ENCODE measurements at regions of chr1 and their contacts with region 1.

Region 1: GRCh38 chr1:117664314-117664713 is 58.5 kb downstream of the TENT5C start:
- DNase-seq: peak; percentile 76
- ATAC-seq: peak; percentile 85
- H3K4me3 Mint-ChIP-seq: no peak overlapping the region
- H3K27ac Mint-ChIP-seq: peak overlapping the region; percentile 84
- H3K4me1 Mint-ChIP-seq: peaks cover 66% of the 10 kb centered on the region
- H3K27me3 Mint-ChIP-seq: peaks cover 5% of the 10 kb centered on the region

Region 2: DNA sequence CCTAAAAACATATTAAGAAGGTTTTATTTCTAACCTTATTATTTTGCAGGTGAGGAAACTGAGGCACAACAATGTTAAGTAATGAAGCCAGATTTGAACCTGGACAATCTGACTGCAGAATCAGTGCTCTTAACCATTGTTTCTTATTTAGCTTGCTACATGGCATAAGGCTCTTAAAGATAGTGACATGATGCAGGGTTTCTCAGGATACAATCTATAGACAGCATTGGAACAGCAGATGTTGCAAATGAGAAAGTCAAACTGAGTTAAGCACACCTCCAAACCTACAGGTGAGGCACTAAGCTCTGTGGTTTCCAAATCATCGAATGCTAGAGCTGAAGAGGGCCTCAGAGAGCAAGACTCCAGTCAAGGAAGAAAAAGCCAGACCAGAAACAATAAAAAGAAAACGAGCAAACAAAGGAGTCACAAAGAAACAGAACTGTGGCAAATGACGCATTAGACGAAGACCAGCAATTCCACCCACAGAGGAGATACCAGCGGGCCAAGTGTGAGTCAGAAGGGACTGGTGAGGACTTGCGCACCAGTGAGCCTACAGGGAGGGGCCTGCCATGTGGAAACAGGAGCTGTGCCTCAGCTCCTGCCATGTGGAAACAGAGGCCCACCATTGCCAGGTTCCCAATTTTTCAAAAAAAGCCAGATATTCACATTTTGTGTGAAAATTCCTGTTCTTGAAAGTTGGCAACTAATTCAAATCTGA is 1107.9 kb before region 1 on chr1:
- CTCF ChIA-PET with region 1: no interaction called
- POLR2A ChIA-PET with region 1: no interaction called
- intact Hi-C with region 1: loop called in 1 of 2 experiments (anchors 5 kb)
- DNase-seq: peak; percentile 88
- ATAC-seq: peak; percentile 92
- H3K4me3 Mint-ChIP-seq: no peak overlapping the region
- H3K27ac Mint-ChIP-seq: peak overlapping the region; percentile 87
- H3K4me1 Mint-ChIP-seq: peaks cover 73% of the 10 kb centered on the region
- H3K27me3 Mint-ChIP-seq: no peaks in the 10 kb centered on the region

Region 3: DNA sequence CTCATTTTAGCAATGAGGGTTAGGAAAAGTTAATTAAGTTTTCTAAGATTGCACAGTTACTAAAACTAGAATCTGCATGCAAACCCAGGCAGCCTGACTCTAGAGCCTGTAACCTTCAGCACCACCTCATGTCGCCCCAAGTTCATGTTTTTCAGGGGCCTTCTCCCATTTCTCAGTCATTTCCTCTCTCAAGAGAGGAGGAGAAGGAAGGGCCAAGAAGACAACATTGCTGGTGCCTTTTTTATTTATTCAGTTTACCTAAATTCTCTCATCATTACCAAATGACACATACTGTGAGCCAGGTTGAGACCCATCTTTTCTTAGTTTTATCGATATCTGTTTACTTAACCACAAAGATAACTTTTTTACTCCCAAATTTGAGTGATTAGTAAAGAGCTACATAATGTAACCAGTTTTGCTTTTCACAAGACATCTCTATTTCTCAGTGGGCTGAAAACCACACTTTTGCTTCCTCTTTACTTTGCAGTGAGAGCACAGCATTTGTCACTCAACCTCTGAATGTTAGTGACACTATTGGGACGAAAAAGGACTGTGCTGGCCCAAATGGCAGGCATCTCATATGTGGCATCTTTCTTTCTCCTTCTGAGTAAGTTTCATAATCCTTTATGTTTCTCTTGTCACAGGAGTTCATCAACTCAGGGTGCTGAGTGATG is 662.9 kb before region 1 on chr1 and contains the start of gene CD101:
- CTCF ChIA-PET with region 1: no interaction called
- POLR2A ChIA-PET with region 1: interaction called, 3 read pairs
- intact Hi-C with region 1: loop called in 1 of 2 experiments (anchors 10 kb)
- DNase-seq: peak; percentile 70
- ATAC-seq: peak; percentile 95
- H3K4me3 Mint-ChIP-seq: peak within 1 kb of the TSS; percentile 3
- H3K27ac Mint-ChIP-seq: peak within 1 kb of the TSS; percentile 66
- H3K4me1 Mint-ChIP-seq: peaks cover 53% of the 10 kb centered on the region
- H3K27me3 Mint-ChIP-seq: peaks cover 3% of the 10 kb centered on the region
- total RNA-seq, gene CD101: 0.30 to 0.60 TPM

Region 4: GRCh38 chr1:117527566-117528102 is 136.7 kb before region 1 on chr1:
- CTCF ChIA-PET with region 1: interaction called, 3 read pairs
- POLR2A ChIA-PET with region 1: no interaction called
- intact Hi-C with region 1: loop called (anchors 1 kb)
- DNase-seq: no peak
- ATAC-seq: peak; percentile 37
- H3K4me3 Mint-ChIP-seq: no peak overlapping the region
- H3K27ac Mint-ChIP-seq: no peak overlapping the region
- H3K4me1 Mint-ChIP-seq: peaks cover 31% of the 10 kb centered on the region
- H3K27me3 Mint-ChIP-seq: no peaks in the 10 kb centered on the region

Region 5: DNA sequence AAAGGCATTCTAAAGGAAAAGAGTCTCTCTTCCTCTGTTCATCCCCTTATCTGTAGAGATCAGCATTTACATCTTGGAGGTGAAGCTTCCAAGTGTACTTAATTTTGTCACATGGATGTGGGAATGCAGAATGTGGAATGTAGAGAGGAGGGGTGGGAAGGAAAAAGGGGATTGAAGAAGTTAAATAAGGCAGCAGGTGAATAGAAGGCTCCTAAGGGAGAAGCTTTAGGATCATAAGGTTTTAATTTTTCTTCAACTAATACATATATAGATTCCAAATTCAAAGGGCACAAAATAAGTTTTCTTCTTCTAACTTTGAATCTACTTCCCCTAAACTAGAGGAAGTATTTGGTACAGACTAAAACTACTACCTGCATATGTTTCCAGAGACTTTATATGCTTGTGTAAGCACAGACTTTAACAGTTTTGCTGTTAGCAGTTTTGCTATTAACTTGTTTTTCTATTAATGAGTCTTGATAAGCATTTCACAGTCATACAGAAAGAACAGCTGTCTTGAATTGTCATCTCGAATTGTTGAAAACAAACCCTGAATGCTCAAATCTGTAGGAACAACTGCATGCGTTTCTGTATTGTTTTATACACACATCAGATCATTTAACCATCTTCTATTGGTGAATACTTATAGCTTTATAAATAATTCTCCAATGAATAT is 45.7 kb before region 1 on chr1:
- CTCF ChIA-PET with region 1: no interaction called
- POLR2A ChIA-PET with region 1: no interaction called
- intact Hi-C with region 1: loop called in 1 of 2 experiments (anchors 2 kb)
- DNase-seq: no peak
- ATAC-seq: peak; percentile 65
- H3K4me3 Mint-ChIP-seq: no peak overlapping the region
- H3K27ac Mint-ChIP-seq: peak overlapping the region; percentile 10
- H3K4me1 Mint-ChIP-seq: peaks cover 60% of the 10 kb centered on the region
- H3K27me3 Mint-ChIP-seq: peaks cover 3% of the 10 kb centered on the region

Region 6: GRCh38 chr1:117929173-117929989 is 265.1 kb after region 1 on chr1 and contains the starts of genes GDAP2 and WDR3:
- CTCF ChIA-PET with region 1: interaction called, 4 read pairs
- POLR2A ChIA-PET with region 1: no interaction called
- intact Hi-C with region 1: loop called in 1 of 2 experiments (anchors 2 kb)
- DNase-seq: peak; percentile 98
- ATAC-seq: peak; percentile 97
- H3K4me3 Mint-ChIP-seq: peak within 1 kb of the TSS; percentile 94
- H3K27ac Mint-ChIP-seq: peak within 1 kb of the TSS; percentile 90
- H3K4me1 Mint-ChIP-seq: peaks cover 54% of the 10 kb centered on the region
- H3K27me3 Mint-ChIP-seq: no peaks in the 10 kb centered on the region
- total RNA-seq, gene GDAP2: 18.8 to 20.9 TPM
- total RNA-seq, gene WDR3: 45.0 to 63.7 TPM

Measured in activated CD4-positive, alpha-beta T cell treated with anti-CD3 and anti-CD28 coated beads for 36 hours (primary cell).